Heart right ventricle (tissue), 16 donors: ENCODE measurements at regions of chr9 and their contacts with region 1.

Region 1: DNA sequence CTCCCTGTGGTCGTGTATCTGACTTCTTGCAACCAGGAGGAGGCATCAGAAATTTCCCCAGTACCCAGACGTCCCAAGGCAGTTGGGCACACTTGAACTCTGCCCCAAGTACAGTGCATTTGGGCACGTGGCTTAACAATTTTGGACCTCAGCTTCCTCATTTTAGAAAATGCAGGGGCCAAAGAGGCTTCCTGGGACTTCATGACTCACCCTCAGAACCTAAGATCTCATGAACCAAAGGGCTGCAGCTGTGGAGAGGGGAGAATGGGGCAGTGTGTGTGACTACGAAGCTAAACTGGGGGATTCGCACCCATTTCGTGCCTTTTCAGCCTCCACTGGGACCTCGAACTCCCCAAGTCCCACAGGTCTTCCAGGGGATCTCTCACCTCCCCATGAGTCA is 59.2 kb downstream of the SYK start:
- DNase-seq: no peak
- ATAC-seq: peak in 1 of 8 donors; percentile 51
- H3K4me3 ChIP-seq: no peak overlapping the region
- H3K27ac ChIP-seq: no peak overlapping the region
- H3K4me1 ChIP-seq: peaks cover 0 to 37% (median 0%) of the 10 kb centered on the region in 9 donors
- H3K27me3 ChIP-seq: no peaks in the 10 kb centered on the region
- CTCF ChIP-seq: no peak

Region 2: DNA sequence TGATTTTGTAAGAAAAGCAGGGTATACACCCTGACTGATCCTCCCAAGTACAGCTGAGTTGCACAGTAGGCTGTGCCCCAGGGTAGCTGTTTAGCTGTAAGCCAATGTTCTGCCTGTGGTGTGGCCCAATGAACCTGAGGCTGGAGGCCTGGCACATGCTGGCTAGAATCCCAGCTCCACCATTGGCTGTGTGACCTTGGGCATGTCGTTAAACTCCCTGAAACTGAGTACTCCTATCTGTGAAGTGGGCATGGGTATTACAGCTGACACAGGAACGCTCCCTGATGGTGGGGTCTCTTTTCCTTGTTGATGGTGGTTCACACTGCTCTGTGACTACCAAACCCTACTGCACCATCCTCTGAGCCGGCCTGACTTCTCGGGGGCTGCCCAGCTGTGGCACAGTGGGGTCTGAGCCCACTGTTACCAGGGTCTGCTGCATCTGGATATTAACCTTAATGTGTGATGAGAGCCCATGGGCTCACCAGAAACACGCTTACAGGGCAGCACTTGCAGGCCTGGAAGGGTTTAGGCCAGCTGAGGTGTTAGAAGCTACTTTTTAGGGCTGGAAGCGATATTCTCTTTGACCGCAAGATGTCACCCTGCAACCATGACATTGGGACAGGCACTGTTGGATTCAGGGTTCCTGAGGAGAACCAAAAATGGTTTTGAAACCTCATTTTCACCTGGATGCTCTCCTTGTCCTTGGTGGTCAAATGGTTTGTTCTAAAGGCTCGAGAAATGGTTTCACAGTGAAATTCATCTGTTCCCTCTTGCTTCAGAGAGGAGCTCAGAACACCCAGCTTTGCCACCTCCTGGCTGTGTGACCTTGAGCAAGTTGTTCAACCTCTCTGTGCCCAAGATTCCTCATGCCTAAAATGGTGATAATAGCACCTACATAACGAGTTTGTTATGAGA is 1262.9 kb before region 1 on chr9:
- intact Hi-C with region 1: loop called in 2 of 10 experiments (anchors 5 to 10 kb)
- DNase-seq: peak in 1 of 2 donors; percentile 61
- ATAC-seq: peak in 7 of 8 donors; percentile 40 to 67 (median 59)
- H3K4me3 ChIP-seq: no peak overlapping the region
- H3K27ac ChIP-seq: no peak overlapping the region
- H3K4me1 ChIP-seq: peaks cover 0 to 3% (median 2%) of the 10 kb centered on the region in 9 donors
- H3K27me3 ChIP-seq: peaks cover 0 to 4% (median 0%) of the 10 kb centered on the region in 7 donors
- CTCF ChIP-seq: peak; percentile 59 to 89 (median 83)

Region 3: DNA sequence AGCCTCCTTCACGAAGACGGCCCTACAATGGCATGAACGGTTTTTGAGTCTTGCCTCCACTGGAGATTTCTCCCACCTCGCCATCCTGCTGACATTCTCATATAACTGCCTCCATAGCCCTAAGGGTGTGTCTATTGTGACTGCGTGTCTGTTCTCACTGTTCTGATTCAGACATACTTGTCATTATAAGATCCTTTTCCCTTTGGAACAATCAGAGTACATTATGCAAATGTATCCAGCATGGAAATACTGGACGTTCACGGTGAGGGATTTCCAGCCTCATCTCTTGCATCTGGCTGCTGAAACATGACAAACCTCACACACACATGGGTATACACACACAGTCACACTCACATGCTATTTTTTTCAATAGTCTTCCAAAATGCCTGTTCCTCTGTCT is 620.3 kb before region 1 on chr9:
- intact Hi-C with region 1: loop called in 1 of 10 experiments (anchors 10 kb)
- DNase-seq: no peak
- ATAC-seq: no peak
- H3K4me3 ChIP-seq: no peak overlapping the region
- H3K27ac ChIP-seq: no peak overlapping the region
- H3K4me1 ChIP-seq: no peaks in the 10 kb centered on the region
- H3K27me3 ChIP-seq: no peaks in the 10 kb centered on the region
- CTCF ChIP-seq: no peak

Region 4: DNA sequence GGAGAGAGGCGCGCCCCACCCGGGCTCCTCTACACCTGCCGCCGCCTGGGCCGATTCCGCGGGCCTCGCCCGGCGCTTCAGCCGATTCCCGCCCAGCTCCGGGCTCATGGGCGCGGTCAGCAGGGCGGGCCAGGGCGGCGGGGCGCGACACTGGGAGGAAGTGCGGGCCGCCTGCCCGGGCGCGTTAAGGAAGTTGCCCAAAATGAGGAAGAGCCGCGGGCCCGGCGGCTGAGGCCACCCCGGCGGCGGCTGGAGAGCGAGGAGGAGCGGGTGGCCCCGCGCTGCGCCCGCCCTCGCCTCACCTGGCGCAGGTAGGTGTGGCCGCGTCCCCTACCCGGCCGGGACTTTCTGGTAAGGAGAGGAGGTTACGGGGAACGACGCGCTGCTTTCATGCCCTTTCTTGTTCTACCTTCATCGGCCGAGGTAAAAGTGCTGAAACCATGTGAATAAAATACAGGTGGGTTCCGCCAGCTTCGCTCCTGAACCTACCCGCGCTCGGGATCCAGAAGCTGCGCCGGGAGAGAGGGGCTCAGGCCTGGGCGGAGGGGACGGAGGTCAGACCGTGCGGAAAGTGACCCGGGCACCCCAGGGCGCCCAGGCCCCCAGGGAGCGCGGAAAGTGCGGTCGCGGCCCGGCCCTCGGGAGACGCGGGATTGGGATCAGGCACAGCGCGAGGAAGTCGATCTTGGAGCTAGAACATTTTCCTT is 59.1 kb before region 1 on chr9 and contains the start of gene SYK:
- intact Hi-C with region 1: loop called in 1 of 10 experiments (anchors 10 kb)
- DNase-seq: peak; percentile 11 to 55
- ATAC-seq: peak; percentile 49 to 93 (median 78)
- H3K4me3 ChIP-seq: peak within 1 kb of the TSS; percentile 20 to 61 (median 45)
- H3K27ac ChIP-seq: peak within 1 kb of the TSS in 7 of 10 donors; percentile 13 to 93 (median 65)
- H3K4me1 ChIP-seq: peaks cover 4 to 55% (median 8%) of the 10 kb centered on the region in 9 donors
- H3K27me3 ChIP-seq: peaks cover 18 to 84% (median 63%) of the 10 kb centered on the region in 7 donors
- CTCF ChIP-seq: no peak
- total RNA-seq, gene SYK: 1.0 to 26.1 (median 3.0) TPM

Region 5: DNA sequence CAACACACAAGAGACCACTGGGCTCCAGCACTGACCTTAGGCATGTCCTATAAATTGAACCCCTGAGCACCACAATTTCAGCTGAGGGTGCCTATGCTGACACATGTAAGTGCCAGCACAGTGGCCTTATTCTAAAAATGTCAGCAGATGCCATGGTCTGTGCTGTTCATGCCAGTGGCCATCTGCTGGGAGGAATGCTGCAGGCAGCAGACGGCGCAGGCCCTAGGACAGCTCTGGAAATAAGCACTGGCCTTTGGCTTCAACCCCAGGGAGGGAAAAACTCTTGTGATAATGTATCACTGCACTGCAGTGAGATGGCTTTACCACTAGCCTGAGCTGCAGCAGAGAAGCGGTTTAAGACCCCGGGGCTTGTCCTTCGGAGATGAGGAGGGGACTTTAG is 39.3 kb after region 1 on chr9:
- intact Hi-C with region 1: no loop called
- DNase-seq: peak; percentile 48 to 63
- ATAC-seq: peak; percentile 88 to 98 (median 92)
- H3K4me3 ChIP-seq: no peak overlapping the region
- H3K27ac ChIP-seq: peak overlapping the region in 3 of 10 donors; percentile 26 to 53 (median 39)
- H3K4me1 ChIP-seq: peaks cover 0 to 10% (median 3%) of the 10 kb centered on the region in 9 donors
- H3K27me3 ChIP-seq: no peaks in the 10 kb centered on the region
- CTCF ChIP-seq: peak; percentile 39 to 73 (median 53)

Region 6: DNA sequence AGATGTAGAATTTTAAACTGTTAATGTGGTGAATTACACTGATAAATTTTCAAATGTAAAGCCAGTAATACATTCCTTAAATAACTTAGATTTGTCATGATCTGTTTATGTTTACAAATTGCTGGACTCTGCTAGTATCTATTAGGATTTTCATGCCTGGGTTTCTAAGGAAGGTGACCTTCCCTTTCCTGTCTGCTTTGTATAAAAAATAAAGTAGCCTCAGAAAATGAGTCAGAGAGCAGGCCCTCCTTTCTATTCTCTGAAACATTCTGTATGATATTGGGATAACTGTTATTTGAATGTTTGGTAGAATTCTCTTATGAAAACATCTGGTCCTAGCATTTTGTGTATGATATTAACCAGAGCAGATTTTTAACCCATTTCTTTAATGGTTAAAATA is 196.1 kb after region 1 on chr9:
- intact Hi-C with region 1: no loop called
- DNase-seq: no peak
- ATAC-seq: peak in 3 of 8 donors; percentile 18 to 52 (median 50)
- H3K4me3 ChIP-seq: no peak overlapping the region
- H3K27ac ChIP-seq: peak overlapping the region in 1 of 10 donors; percentile 34
- H3K4me1 ChIP-seq: peaks cover 2 to 34% (median 15%) of the 10 kb centered on the region in 9 donors
- H3K27me3 ChIP-seq: no peaks in the 10 kb centered on the region
- CTCF ChIP-seq: no peak